GM12878 (cell line): ENCODE measurements at regions of chr3 and their contacts with region 1.

Region 1: GRCh38 chr3:111717601-111718000 is 122.5 kb upstream of the ZBED2 start:
- DNase-seq: no peak
- ATAC-seq: peak; percentile 99
- H3K4me3 ChIP-seq: no peak overlapping the region
- H3K27ac ChIP-seq: no peak overlapping the region
- H3K4me1 ChIP-seq: no peaks in the 10 kb centered on the region
- H3K27me3 ChIP-seq: no peaks in the 10 kb centered on the region
- CTCF ChIP-seq: peak; percentile 87 to 95 (median 92)
- EP300 ChIP-seq: no peak
- POLR2A ChIP-seq: no peak
- RAD21 ChIP-seq: peak; percentile 98

Region 2: DNA sequence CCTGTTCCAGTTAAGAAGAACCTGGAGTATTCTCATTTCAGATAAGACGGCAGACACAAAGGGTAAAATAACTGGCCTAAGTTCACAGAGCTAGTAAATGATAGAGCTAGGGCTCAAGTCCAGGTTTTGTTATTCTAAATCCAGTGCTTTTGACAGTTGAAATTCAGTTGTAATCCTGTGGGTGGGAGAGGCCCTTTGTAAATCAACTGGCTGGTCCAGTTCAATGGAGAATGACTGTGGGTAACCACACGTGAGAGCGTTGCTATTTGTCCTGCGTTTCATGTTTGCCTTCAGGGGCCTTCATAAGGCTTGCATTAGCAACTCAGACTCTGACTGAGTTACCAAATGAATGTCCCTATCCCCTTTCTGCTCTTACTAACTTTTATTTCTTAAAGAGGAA is 199.8 kb before region 1 on chr3:
- CTCF ChIA-PET with region 1: no interaction called
- POLR2A ChIA-PET with region 1: no interaction called
- RAD21 ChIA-PET with region 1: no interaction called
- SMC1A ChIA-PET with region 1: no interaction called
- in situ Hi-C with region 1: no loop called
- intact Hi-C with region 1: no loop called
- DNase-seq: no peak
- ATAC-seq: peak; percentile 36; the same call in 2 of the 3 replicates
- H3K4me3 ChIP-seq: no peak overlapping the region
- H3K27ac ChIP-seq: no peak overlapping the region
- H3K4me1 ChIP-seq: no peaks in the 10 kb centered on the region
- H3K27me3 ChIP-seq: no peaks in the 10 kb centered on the region
- CTCF ChIP-seq: no peak
- EP300 ChIP-seq: no peak
- POLR2A ChIP-seq: no peak
- RAD21 ChIP-seq: no peak

Region 3: GRCh38 chr3:111676211-111677006 is 41.2 kb before region 1 on chr3:
- CTCF ChIA-PET with region 1: interaction called, 16 read pairs
- POLR2A ChIA-PET with region 1: interaction called, 3 read pairs
- RAD21 ChIA-PET with region 1: interaction called, 6 read pairs
- SMC1A ChIA-PET with region 1: interaction called, 12 read pairs
- in situ Hi-C with region 1: no loop called
- intact Hi-C with region 1: no loop called
- DNase-seq: no peak
- ATAC-seq: peak; percentile 38
- H3K4me3 ChIP-seq: peak overlapping the region; percentile 67; the same call in 1 of the 2 replicates
- H3K27ac ChIP-seq: no peak overlapping the region
- H3K4me1 ChIP-seq: peaks cover 17% of the 10 kb centered on the region
- H3K27me3 ChIP-seq: no peaks in the 10 kb centered on the region
- CTCF ChIP-seq: no peak
- EP300 ChIP-seq: no peak
- POLR2A ChIP-seq: no peak
- RAD21 ChIP-seq: no peak

Region 4: DNA sequence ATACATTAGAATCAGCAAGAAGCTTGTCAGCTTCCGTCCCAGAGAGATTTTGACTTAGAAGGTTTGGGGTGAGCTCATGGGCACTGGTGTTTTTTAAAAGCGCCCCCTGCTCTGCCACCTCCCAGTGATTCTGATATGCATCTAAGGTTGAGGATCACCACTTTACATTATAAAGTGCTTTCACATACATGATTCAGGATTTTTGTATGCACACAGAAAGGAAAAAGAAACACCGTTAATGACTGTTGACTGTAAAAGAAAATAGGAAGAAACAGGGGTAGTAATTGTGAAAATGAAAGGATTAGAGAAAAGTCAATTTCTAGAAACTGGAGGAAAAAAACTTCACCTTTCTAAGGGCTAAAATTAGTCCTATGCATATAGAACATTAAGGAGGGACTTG is 17.5 kb before region 1 on chr3:
- CTCF ChIA-PET with region 1: interaction called, 57 read pairs
- POLR2A ChIA-PET with region 1: interaction called, 6 read pairs
- RAD21 ChIA-PET with region 1: interaction called, 10 read pairs
- SMC1A ChIA-PET with region 1: interaction called, 59 read pairs
- in situ Hi-C with region 1: no loop called
- intact Hi-C with region 1: no loop called
- DNase-seq: no peak
- ATAC-seq: peak; percentile 61
- H3K4me3 ChIP-seq: no peak overlapping the region
- H3K27ac ChIP-seq: no peak overlapping the region
- H3K4me1 ChIP-seq: peaks cover 11% of the 10 kb centered on the region; the same call in 1 of the 2 replicates
- H3K27me3 ChIP-seq: no peaks in the 10 kb centered on the region
- CTCF ChIP-seq: no peak
- EP300 ChIP-seq: no peak
- POLR2A ChIP-seq: no peak
- RAD21 ChIP-seq: no peak

Region 5: DNA sequence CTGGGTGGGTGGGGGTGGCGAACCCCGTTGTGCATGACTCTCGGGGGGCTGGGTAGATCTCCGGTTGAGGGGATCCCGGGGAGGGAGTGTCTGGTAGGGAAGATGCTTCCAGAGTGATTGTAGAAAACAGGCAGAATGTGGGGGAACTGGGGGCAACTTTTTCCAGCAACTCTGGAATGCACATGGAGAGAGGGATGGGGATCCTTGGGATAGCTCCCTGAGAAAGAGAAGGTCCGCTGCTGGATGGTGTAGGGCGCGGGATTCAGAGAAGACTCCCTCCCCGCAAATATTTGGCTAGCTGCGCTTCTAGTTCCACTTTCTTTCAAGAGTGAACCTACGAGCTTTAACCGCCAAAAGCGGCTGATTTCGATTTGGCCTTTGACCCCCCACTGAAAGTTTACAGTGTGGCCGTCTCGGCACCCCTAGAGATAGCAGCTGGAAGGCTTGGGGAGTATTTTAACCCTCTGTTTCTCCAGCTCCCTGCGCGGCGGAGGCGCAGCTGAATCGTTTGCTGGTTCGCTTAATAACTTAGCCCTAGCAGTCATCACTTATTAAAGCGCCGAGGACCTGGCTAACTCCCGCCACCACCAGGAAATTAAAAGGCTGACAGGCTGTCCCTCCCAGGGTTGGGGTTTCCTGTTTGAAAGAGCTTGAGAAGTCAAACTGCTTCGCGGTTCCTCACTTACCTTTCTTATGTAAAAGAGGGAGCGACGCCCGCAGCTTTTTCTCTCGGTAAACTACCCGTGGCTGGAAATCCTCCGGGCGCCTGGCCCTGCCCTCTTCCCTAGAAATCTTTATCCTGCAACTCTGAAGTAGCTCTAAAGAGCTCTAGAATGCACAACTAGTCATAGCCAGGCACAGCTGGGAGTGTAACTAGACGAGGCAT is 142.6 kb after region 1 on chr3:
- CTCF ChIA-PET with region 1: interaction called, 157 read pairs
- POLR2A ChIA-PET with region 1: no interaction called
- RAD21 ChIA-PET with region 1: interaction called, 76 read pairs
- SMC1A ChIA-PET with region 1: interaction called, 120 read pairs
- in situ Hi-C with region 1: no loop called
- intact Hi-C with region 1: loop called (anchors 1 kb)
- DNase-seq: peak; percentile 30
- ATAC-seq: peak; percentile 91
- H3K4me3 ChIP-seq: peak overlapping the region; percentile 64
- H3K27ac ChIP-seq: no peak overlapping the region
- H3K4me1 ChIP-seq: peaks cover 5% of the 10 kb centered on the region
- H3K27me3 ChIP-seq: peaks cover 2 to 13% of the 10 kb centered on the region in 2 experiments
- CTCF ChIP-seq: peak; percentile 21 to 33 (median 33); a peak in 3 of 6 replicates
- EP300 ChIP-seq: no peak
- POLR2A ChIP-seq: no peak
- RAD21 ChIP-seq: peak; percentile 53

Region 6: DNA sequence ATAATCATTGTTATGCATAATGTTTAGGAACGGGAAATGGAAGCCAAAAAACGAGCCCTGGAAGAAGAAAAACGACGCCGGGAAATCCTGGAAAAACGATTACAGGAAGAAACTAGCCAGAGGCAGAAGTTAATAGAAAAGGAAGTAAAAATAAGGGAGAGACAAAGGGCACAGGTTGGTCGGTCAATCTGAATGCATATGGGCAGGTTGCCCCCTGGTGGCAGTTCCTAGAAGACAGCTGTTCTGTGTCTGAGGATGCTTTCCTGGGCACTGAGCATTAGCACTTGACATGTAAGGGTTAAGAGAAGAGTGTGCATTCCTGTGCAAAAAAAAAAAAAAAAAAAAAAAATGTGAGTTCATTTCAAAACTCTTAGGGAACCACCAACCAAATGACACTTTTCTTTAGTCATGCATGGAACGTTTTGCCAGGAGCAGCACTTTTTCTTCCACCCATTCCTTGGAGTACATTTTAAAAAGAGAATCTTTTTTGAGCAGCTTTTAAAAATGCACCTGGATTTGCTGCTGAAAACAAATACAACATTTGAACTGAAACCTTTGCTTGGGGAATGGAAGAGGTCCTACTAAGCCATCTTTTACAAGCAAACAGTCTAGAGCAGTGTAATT is 250.2 kb after region 1 on chr3:
- CTCF ChIA-PET with region 1: interaction called, 380 read pairs
- POLR2A ChIA-PET with region 1: interaction called, 5 read pairs
- RAD21 ChIA-PET with region 1: interaction called, 177 read pairs
- SMC1A ChIA-PET with region 1: interaction called, 424 read pairs
- in situ Hi-C with region 1: loop called (anchors 5 kb)
- intact Hi-C with region 1: loop called (anchors 1 kb)
- DNase-seq: no peak
- ATAC-seq: peak; percentile 99
- H3K4me3 ChIP-seq: no peak overlapping the region
- H3K27ac ChIP-seq: no peak overlapping the region
- H3K4me1 ChIP-seq: no peaks in the 10 kb centered on the region
- H3K27me3 ChIP-seq: no peaks in the 10 kb centered on the region
- CTCF ChIP-seq: peak; percentile 78 to 87 (median 85)
- EP300 ChIP-seq: no peak
- POLR2A ChIP-seq: no peak
- RAD21 ChIP-seq: peak; percentile 90

Region 7: GRCh38 chr3:111998636-111999483 is 281.3 kb after region 1 on chr3 and contains the start of gene TAGLN3:
- CTCF ChIA-PET with region 1: interaction called, 6 read pairs
- POLR2A ChIA-PET with region 1: no interaction called
- RAD21 ChIA-PET with region 1: no interaction called
- SMC1A ChIA-PET with region 1: interaction called, 18 read pairs
- in situ Hi-C with region 1: no loop called
- intact Hi-C with region 1: no loop called
- DNase-seq: no peak
- ATAC-seq: peak; percentile 66
- H3K4me3 ChIP-seq: peak within 1 kb of the TSS; percentile 66
- H3K27ac ChIP-seq: no peak within 1 kb of the TSS
- H3K4me1 ChIP-seq: peaks cover 6% of the 10 kb centered on the region; the same call in 1 of the 2 replicates
- H3K27me3 ChIP-seq: peaks cover 0 to 2% of the 10 kb centered on the region in 2 experiments; a peak in 3 of 4 replicates
- CTCF ChIP-seq: no peak
- EP300 ChIP-seq: no peak
- POLR2A ChIP-seq: no peak
- RAD21 ChIP-seq: no peak
- polyA plus RNA-seq, gene TAGLN3: 0.07 TPM in 1 of 2 experiments, not detected in the other

Region 8: GRCh38 chr3:112043603-112044201 is 326.1 kb after region 1 on chr3:
- CTCF ChIA-PET with region 1: interaction called, 33 read pairs
- POLR2A ChIA-PET with region 1: no interaction called
- RAD21 ChIA-PET with region 1: interaction called, 4 read pairs
- SMC1A ChIA-PET with region 1: interaction called, 12 read pairs
- in situ Hi-C with region 1: no loop called
- intact Hi-C with region 1: loop called (anchors 10 kb)
- DNase-seq: peak; percentile 8
- ATAC-seq: peak; percentile 95
- H3K4me3 ChIP-seq: no peak overlapping the region
- H3K27ac ChIP-seq: no peak overlapping the region
- H3K4me1 ChIP-seq: no peaks in the 10 kb centered on the region
- H3K27me3 ChIP-seq: peaks cover 0 to 6% of the 10 kb centered on the region in 2 experiments; a peak in 1 of 4 replicates
- CTCF ChIP-seq: peak; percentile 80 to 92 (median 86)
- EP300 ChIP-seq: no peak
- POLR2A ChIP-seq: no peak
- RAD21 ChIP-seq: peak; percentile 69